Sigmoid colon (tissue), 7 donors: ENCODE measurements at regions of chr12 and their contacts with region 1.

Region 1: GRCh38 chr12:42372154-42372791 is 46.3 kb downstream of the PPHLN1 start:
- DNase-seq: no peak
- H3K4me3 ChIP-seq: no peak overlapping the region
- H3K27ac ChIP-seq: no peak overlapping the region
- H3K4me1 ChIP-seq: no peaks in the 10 kb centered on the region
- H3K27me3 ChIP-seq: no peaks in the 10 kb centered on the region
- CTCF ChIP-seq: peak; percentile 18 to 69 (median 31)
- EP300 ChIP-seq: no peak
- POLR2A ChIP-seq: no peak

Region 2: DNA sequence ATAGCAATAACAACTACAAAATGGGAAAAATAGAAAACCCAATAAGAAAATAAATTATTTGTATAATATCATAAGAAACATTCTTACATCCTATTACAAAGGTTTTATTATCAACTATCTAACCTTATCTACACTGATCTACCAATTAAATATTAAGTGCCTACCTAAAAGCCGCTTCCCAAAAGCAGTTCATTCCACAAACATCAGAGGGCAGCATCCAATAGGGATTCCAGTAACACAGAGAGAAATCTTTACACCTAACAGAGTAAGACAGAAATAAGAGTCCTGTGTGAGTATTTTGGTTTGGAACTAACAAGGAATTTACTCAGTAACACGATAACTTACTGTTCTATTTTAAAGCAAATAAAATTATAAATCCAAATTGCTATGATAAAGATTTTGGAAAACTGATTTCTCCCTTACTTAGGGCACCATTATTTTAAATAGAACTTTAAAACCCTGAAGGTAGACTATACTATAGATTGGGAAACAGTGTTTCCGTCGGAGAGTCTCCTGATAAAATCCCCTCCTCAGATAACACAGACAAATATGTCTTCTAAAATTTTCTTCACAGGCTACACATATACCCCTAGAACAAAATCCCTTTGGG is 242.6 kb before region 1 on chr12:
- intact Hi-C with region 1: loop called (anchors 2 kb)
- DNase-seq: no peak
- H3K4me3 ChIP-seq: no peak overlapping the region
- H3K27ac ChIP-seq: no peak overlapping the region
- H3K4me1 ChIP-seq: peaks cover 0 to 13% (median 3%) of the 10 kb centered on the region in 4 donors
- H3K27me3 ChIP-seq: no peaks in the 10 kb centered on the region
- CTCF ChIP-seq: peak; percentile 70 to 77 (median 75)
- EP300 ChIP-seq: no peak
- POLR2A ChIP-seq: no peak